ENCODE measurements at regions of chr3 and their contacts with region 1.

Region 1: DNA sequence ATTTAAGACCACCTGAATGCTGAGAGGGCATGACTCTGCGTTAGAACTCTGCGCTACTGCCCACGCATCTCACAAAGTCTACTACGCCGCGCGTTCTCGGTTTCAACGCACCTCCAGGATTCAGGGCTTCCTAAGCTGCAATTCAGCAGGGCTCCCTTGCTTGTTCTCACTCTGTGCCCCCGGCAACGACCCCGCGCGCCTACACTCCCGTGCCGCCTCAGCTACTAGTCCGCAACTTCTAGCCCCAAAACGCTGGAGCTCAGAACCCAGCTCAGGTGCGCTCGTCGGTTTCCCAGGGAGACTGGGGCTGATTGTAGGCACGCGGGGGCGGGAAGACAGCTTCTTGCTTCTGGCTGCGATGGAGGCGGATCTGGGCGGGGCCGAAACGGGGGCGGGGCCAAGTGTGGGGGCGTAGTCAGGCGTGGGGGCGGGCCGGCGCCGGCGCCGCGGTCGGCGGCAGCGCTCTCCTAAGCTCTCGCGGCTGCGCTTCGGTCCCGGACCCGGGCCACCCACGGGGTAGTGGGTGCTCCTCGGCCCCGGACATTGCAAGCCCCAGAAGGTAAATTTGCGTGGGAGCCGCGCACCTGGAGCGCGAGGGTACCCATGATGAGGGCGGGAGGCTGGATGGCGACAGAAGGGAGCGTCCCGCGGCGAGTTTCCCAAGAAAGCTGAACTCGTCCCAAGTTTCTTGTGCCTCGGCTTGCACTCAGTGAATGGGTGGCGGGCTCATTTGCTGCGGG is at the start of gene ARHGEF26:
- DNase-seq: peak; percentile 95
- H3K4me3 ChIP-seq: peak within 1 kb of the TSS; percentile 78 to 97 (median 96)
- H3K27ac ChIP-seq: peak within 1 kb of the TSS; percentile 79 to 94 (median 88)
- H3K4me1 ChIP-seq: peaks cover 0 to 28% (median 15%) of the 10 kb centered on the region in 4 donors
- H3K27me3 ChIP-seq: no peaks in the 10 kb centered on the region
- CTCF ChIP-seq: no peak
- EP300 ChIP-seq: no peak
- POLR2A ChIP-seq: peak; percentile 43 to 81
- total RNA-seq, gene ARHGEF26: 48.4 to 125 (median 81.0) TPM

Region 2: GRCh38 chr3:153903430-153903829 is 217.7 kb before region 1 on chr3:
- intact Hi-C with region 1: no loop called
- DNase-seq: no peak
- H3K4me3 ChIP-seq: no peak overlapping the region
- H3K27ac ChIP-seq: no peak overlapping the region
- H3K4me1 ChIP-seq: no peaks in the 10 kb centered on the region
- H3K27me3 ChIP-seq: no peaks in the 10 kb centered on the region
- CTCF ChIP-seq: no peak
- EP300 ChIP-seq: no peak
- POLR2A ChIP-seq: no peak

Region 3: DNA sequence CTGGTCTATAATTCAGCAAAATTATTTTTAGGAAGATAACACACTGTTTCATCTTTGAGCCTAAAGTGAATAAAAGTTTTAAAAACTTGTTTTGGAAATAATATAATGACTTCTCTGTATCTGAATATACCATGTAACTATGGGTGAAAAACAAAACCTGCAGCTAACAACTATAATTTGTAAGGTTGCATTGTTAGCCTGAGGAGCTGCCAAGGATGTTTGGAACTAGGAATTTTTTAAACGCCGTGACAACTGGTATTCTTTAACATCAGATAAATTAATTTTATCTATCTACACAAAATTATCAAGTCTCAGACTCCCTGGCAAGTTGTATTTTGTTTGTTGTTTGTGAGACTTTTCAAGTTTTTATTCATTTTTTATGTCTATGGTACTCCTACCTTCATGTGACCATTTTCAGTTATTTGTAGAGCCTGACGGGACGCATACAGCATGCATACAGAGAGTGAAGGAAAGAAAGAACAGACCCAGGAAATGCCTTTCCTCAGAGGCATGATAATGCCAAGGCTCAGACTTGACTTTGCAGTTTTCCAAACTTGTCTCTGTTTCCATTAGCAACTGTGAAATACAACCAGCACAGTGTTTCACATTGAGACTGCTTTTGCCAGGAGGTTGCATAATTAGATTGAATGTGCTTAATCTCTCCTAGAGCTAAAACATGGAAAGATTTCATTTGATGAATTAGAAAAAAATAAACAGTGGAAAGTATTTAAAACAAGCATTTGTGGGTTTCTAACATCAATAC is 60.7 kb before region 1 on chr3:
- intact Hi-C with region 1: loop called (anchors 2 kb)
- DNase-seq: no peak
- H3K4me3 ChIP-seq: peak overlapping the region in 1 of 4 donors; percentile 7
- H3K27ac ChIP-seq: peak overlapping the region; percentile 60 to 86 (median 84)
- H3K4me1 ChIP-seq: peaks cover 0 to 40% (median 23%) of the 10 kb centered on the region in 4 donors
- H3K27me3 ChIP-seq: no peaks in the 10 kb centered on the region
- CTCF ChIP-seq: no peak
- EP300 ChIP-seq: peak in 2 of 4 donors; percentile 52 to 66
- POLR2A ChIP-seq: no peak

Region 4: DNA sequence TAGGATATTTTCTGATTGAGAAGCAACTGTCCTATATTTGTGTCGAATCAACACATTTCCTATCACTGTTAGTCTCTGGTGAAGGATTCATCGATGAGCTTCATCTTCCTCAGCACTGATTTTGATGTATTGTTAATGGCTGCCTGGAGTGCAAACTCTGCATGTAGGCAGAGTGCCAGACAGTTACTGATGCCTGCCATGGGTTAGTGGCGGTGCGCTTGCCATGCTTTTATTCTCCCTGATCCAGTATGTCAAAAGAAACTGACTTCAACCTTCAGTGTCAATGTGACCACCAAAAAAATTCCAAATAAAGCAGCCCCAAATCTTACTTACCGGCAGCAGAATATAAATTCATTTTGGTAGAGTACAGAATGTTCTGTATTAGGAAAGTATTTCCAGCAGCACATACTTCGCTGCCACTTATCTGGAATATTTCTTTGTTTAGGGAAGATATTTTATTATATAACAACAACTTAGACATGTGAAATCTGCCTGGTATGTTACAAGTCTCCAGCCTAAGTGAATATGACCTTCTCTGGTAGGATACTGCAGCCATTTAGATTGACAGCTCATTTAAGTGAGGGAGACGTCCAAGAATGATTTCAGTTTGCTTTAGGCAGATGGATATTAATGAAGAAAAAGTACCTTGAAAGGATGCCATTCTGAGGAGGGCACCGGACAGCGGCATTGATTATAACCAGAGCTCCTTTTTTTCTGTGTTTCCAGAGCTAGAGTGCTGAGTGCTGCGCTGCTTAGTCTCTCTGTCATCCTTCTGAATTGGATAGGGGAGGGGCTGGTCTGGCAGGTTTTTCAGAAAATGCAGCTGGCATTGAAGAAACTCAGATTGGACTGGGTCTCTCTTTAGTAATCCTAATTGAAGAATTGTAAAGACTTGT is 60.0 kb after region 1 on chr3:
- intact Hi-C with region 1: loop called (anchors 5 kb)
- DNase-seq: peak; percentile 63
- H3K4me3 ChIP-seq: no peak overlapping the region
- H3K27ac ChIP-seq: peak overlapping the region; percentile 74 to 87 (median 84)
- H3K4me1 ChIP-seq: peaks cover 0 to 74% (median 63%) of the 10 kb centered on the region in 4 donors
- H3K27me3 ChIP-seq: no peaks in the 10 kb centered on the region
- CTCF ChIP-seq: no peak
- EP300 ChIP-seq: peak in 3 of 4 donors; percentile 91 to 96 (median 94)
- POLR2A ChIP-seq: no peak

Region 5: DNA sequence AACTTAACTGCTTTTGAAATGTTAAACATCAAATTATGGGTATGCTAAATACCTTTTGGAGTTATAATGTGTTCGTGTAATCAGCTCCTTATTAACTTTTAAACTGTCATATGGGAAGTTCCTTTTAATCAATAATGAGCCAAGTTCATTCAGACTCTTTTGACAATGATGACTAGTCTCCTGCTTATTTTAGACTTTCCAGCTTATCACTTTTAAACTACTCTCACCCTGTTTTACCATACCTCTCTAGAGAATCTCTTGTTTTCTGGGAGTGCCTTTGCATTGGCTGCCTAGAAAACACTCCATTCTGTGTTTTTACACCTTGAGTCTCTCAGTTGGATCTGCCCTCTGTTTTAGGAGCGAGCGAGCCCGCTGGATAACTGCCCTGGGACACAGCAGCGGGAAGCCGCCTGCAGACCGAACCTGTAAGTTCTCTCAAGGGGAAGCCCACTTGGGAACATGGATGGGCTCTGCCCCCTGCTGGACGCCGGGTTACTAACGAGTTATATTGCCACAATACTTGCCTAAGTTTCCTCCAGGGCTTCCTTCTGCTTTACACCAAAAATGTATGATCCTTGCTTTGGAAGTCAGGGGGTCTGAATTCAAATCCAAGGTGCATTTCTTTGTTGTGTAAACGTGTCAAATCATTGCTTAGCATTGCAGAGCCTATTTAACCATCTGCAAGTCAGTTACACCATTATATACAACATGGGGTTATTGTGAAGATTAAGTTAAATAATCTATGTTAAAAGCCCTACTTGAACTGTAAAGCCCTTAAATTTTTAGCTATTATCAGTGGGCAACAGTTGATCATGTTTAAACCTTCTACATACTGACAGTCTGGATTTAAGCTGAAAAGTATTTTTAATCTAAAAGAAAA is 131.9 kb after region 1 on chr3:
- intact Hi-C with region 1: loop called (anchors 1 kb)
- DNase-seq: peak; percentile 96
- H3K4me3 ChIP-seq: no peak overlapping the region
- H3K27ac ChIP-seq: peak overlapping the region in 3 of 4 donors; percentile 17 to 44 (median 29)
- H3K4me1 ChIP-seq: peaks cover 0 to 25% (median 19%) of the 10 kb centered on the region in 4 donors
- H3K27me3 ChIP-seq: no peaks in the 10 kb centered on the region
- CTCF ChIP-seq: peak; percentile 90 to 94 (median 92)
- EP300 ChIP-seq: no peak
- POLR2A ChIP-seq: no peak

Region 6: DNA sequence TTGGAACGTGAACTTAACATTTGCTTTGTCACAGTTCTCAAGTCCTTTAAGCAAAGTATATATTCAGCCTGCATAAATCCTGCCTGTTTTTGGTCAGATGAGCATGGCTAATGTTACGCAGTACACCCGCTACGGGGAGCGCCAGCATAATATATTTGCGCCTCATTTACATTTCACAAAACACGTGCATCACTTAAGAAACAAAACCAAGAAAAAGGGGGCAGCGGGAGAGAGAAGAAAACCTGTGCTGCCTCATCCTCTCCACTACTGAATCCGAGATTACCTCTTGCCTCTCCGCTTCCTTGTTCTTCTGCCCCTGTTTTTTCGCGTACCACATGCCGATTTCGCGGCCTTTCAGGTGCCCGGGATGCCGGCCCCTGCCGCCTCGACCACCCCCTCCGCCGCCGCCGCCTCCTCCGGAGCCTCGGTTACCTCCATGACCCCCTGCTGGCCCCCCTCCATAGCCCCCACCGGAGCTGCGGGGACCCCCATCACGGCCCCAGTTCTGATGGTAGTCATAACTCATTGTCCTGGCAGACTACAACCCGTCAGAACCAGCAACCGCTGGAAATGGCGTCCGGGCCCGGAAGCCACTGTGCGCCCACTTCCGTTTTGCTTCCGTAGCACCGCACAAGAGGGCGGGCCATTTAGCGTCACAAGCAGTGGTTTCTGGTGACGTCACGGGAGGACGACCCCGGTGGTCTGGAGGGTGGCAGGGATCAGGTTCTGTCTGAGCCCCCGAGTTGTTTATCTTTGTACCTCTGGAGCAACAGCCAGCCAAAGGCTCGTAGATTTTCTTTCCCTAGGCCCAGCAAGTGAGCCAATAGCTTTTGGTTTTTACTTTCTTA is 203.0 kb after region 1 on chr3 and contains the start of gene DHX36:
- intact Hi-C with region 1: loop called (anchors 10 kb)
- DNase-seq: peak; percentile 95
- H3K4me3 ChIP-seq: peak within 1 kb of the TSS; percentile 62 to 80 (median 76)
- H3K27ac ChIP-seq: peak within 1 kb of the TSS; percentile 86 to 92 (median 90)
- H3K4me1 ChIP-seq: peaks cover 0 to 44% (median 39%) of the 10 kb centered on the region in 4 donors
- H3K27me3 ChIP-seq: no peaks in the 10 kb centered on the region
- CTCF ChIP-seq: no peak
- EP300 ChIP-seq: no peak
- POLR2A ChIP-seq: peak; percentile 57 to 77
- total RNA-seq, gene DHX36: 56.2 to 76.7 (median 64.5) TPM

Measured in sigmoid colon (tissue), 7 donors.